Panc1 (cell line): ENCODE measurements at regions of chr7 and their contacts with region 1.

Region 1: DNA sequence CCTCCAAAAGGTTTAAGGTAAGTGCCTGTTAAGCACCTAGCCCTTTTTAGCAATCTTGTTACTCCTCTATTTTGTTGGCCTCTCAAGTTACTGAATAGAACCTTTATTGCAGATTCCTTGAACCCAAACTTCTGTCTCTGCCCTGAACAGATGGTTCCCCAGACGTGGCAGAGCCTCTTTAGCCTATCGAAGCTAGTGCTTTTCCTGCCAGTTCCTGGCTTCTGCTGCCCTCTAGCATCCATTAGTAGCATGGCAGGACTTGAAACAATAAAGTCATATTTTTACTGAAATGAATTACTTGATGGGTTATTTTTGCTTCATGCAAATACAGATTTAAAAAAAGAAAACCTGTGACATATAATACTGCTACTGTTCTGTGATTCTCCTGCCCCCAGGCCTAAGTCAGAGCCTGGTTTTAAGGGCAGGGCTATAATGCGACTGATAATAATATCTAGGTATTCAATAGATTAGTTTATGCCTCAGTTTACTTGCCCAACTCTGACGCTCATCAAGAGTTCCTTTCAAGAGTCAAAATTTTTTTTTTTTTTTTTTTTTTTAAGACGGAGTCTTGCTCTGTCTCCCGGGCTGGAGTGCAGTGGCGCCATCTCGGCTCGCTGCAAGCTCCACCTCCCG is 84.3 kb upstream of the PHF14 start:
- DNase-seq: peak; percentile 39
- ATAC-seq: peak; percentile 93
- H3K4me3 ChIP-seq: no peak overlapping the region
- H3K27ac ChIP-seq: no peak overlapping the region
- H3K4me1 ChIP-seq: no peaks in the 10 kb centered on the region
- H3K27me3 ChIP-seq: 0 out of 2 replicates have a peak, but pooled peaks cover 3% of the 10 kb centered on the region
- CTCF ChIP-seq: peak; percentile 94

Region 2: DNA sequence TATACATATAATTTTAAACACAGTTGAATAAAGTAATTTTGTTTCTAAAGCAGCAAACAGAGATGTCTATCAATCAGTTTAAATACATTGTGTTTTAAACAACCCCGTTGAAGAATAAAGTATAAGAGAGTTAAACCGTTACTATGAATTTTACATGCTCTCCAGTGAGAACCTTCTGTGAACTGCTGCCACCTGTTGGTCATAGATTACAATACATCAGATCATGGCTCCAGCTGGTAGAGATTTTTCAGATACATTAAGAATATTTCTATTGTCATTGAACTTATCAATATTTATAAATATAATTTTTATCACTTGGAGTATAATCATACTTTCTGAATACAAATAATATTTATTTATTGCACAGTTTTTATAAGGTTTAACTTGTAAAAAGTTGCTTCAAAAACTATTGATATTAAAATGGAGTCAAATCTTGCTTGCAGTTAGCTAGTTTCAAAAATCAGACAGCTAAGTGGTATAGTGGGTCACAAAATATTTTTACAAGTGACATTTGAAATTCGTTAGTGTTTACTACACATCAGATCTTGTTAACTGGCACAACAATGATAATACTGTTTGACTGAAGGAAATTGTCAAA is 476.9 kb before region 1 on chr7:
- CTCF ChIA-PET with region 1: interaction called, 3 read pairs
- POLR2A ChIA-PET with region 1: no interaction called
- in situ Hi-C with region 1: no loop called
- intact Hi-C with region 1: loop called (anchors 10 kb)
- DNase-seq: peak; percentile 15
- ATAC-seq: peak; percentile 78
- H3K4me3 ChIP-seq: no peak overlapping the region
- H3K27ac ChIP-seq: no peak overlapping the region
- H3K4me1 ChIP-seq: no peaks in the 10 kb centered on the region
- H3K27me3 ChIP-seq: no peaks in the 10 kb centered on the region
- CTCF ChIP-seq: peak; percentile 79; the same call in 1 of the 2 replicates

Region 3: GRCh38 chr7:10537764-10538163 is 351.6 kb before region 1 on chr7:
- CTCF ChIA-PET with region 1: no interaction called
- POLR2A ChIA-PET with region 1: interaction called, 16 read pairs
- in situ Hi-C with region 1: no loop called
- intact Hi-C with region 1: no loop called
- DNase-seq: no peak
- ATAC-seq: no peak
- H3K4me3 ChIP-seq: no peak overlapping the region
- H3K27ac ChIP-seq: no peak overlapping the region
- H3K4me1 ChIP-seq: no peaks in the 10 kb centered on the region
- H3K27me3 ChIP-seq: no peaks in the 10 kb centered on the region
- CTCF ChIP-seq: no peak